ENCODE measurements at regions of chr16 and their contacts with region 1.

Region 1: GRCh38 chr16:68146585-68146984 is 61.4 kb downstream of the NFATC3 start:
- DNase-seq: no peak
- H3K4me3 ChIP-seq: no peak overlapping the region
- H3K4me3 Mint-ChIP-seq: no peak overlapping the region
- H3K27ac Mint-ChIP-seq: no peak overlapping the region
- H3K4me1 ChIP-seq: 0 out of 2 replicates have a peak, but pooled peaks cover 5% of the 10 kb centered on the region
- H3K4me1 Mint-ChIP-seq: peaks cover 8% of the 10 kb centered on the region
- H3K27me3 ChIP-seq: no peaks in the 10 kb centered on the region
- H3K27me3 Mint-ChIP-seq: no peaks in the 10 kb centered on the region
- CTCF ChIP-seq: no peak

Region 2: GRCh38 chr16:67349172-67349571 is 797.4 kb before region 1 on chr16:
- CTCF ChIA-PET with region 1: interaction called, 11 read pairs
- POLR2A ChIA-PET with region 1: no interaction called
- intact Hi-C with region 1: no loop called
- DNase-seq: peak in 1 of 2 experiments; percentile 28
- H3K4me3 ChIP-seq: no peak overlapping the region
- H3K4me3 Mint-ChIP-seq: no peak overlapping the region
- H3K27ac Mint-ChIP-seq: no peak overlapping the region
- H3K4me1 ChIP-seq: no peaks in the 10 kb centered on the region
- H3K4me1 Mint-ChIP-seq: no peaks in the 10 kb centered on the region
- H3K27me3 ChIP-seq: no peaks in the 10 kb centered on the region
- H3K27me3 Mint-ChIP-seq: no peaks in the 10 kb centered on the region
- CTCF ChIP-seq: peak; percentile 34 to 69

Region 3: GRCh38 chr16:68244903-68245853 is 98.6 kb after region 1 on chr16 and contains the start of gene PLA2G15:
- CTCF ChIA-PET with region 1: no interaction called
- POLR2A ChIA-PET with region 1: no interaction called
- intact Hi-C with region 1: no loop called
- DNase-seq: peak; percentile 98 to 99
- H3K4me3 ChIP-seq: peak within 1 kb of the TSS; percentile 100
- H3K4me3 Mint-ChIP-seq: peak within 1 kb of the TSS; percentile 91
- H3K27ac Mint-ChIP-seq: peak within 1 kb of the TSS; percentile 69
- H3K4me1 ChIP-seq: peaks cover 12% of the 10 kb centered on the region
- H3K4me1 Mint-ChIP-seq: peaks cover 14% of the 10 kb centered on the region
- H3K27me3 ChIP-seq: no peaks in the 10 kb centered on the region
- H3K27me3 Mint-ChIP-seq: no peaks in the 10 kb centered on the region
- CTCF ChIP-seq: no peak
- total RNA-seq, gene PLA2G15: 33.2 and 33.4 TPM in 2 replicates